CD8-positive, alpha-beta memory T cell (primary cell): ENCODE measurements at regions of chr1 and their contacts with region 1.

Region 1: GRCh38 chr1:42766741-42767509 is at the starts of genes C1orf50 and P3H1:
- DNase-seq: peak; percentile 100
- H3K4me3 ChIP-seq: peak within 1 kb of the TSS; percentile 83
- H3K4me3 Mint-ChIP-seq: no peak within 1 kb of the TSS
- H3K27ac ChIP-seq: peak within 1 kb of the TSS; percentile 90
- H3K27ac Mint-ChIP-seq: peak within 1 kb of the TSS; percentile 64 to 97 (median 94)
- H3K4me1 ChIP-seq: peaks cover 37% of the 10 kb centered on the region
- H3K4me1 Mint-ChIP-seq: peaks cover 24 to 43% (median 36%) of the 10 kb centered on the region in 3 donors
- H3K27me3 ChIP-seq: no peaks in the 10 kb centered on the region
- H3K27me3 Mint-ChIP-seq: no peaks in the 10 kb centered on the region
- total RNA-seq, gene C1orf50: 5.4 to 8.7 TPM
- total RNA-seq, gene P3H1: 35.6 to 38.5 TPM

Region 2: DNA sequence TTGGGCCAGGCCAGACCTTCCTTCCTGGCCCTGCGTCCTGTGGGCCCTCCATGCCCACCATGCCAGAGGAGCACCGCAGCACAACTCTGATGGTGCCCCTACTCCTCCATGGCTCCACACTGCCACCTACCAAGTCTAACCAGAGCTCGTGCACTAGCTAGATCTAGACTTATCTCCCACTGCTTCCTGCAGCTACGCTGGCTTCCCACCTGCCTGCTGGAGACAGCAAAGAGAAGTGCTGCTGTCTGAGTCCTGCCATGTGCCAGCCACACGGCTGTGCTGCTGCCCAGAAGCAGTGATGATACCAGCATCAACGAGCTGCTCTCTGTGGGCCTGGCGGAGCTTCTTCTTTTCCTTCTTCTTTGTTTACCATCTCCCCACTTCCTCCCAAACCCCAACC is 609.3 kb before region 1 on chr1:
- CTCF ChIA-PET with region 1: no interaction called
- POLR2A ChIA-PET with region 1: no interaction called
- DNase-seq: no peak
- H3K4me3 ChIP-seq: no peak overlapping the region
- H3K4me3 Mint-ChIP-seq: no peak overlapping the region
- H3K27ac ChIP-seq: no peak overlapping the region
- H3K27ac Mint-ChIP-seq: no peak overlapping the region
- H3K4me1 ChIP-seq: no peaks in the 10 kb centered on the region
- H3K4me1 Mint-ChIP-seq: peaks cover 6 to 9% (median 8%) of the 10 kb centered on the region in 3 donors
- H3K27me3 ChIP-seq: no peaks in the 10 kb centered on the region
- H3K27me3 Mint-ChIP-seq: peaks cover 12 to 13% of the 10 kb centered on the region in 2 donors

Region 3: GRCh38 chr1:42439940-42440339 is 327.0 kb before region 1 on chr1:
- CTCF ChIA-PET with region 1: no interaction called
- POLR2A ChIA-PET with region 1: no interaction called
- DNase-seq: no peak
- H3K4me3 ChIP-seq: no peak overlapping the region
- H3K4me3 Mint-ChIP-seq: no peak overlapping the region
- H3K27ac ChIP-seq: no peak overlapping the region
- H3K27ac Mint-ChIP-seq: no peak overlapping the region
- H3K4me1 ChIP-seq: no peaks in the 10 kb centered on the region
- H3K4me1 Mint-ChIP-seq: no peaks in the 10 kb centered on the region
- H3K27me3 ChIP-seq: no peaks in the 10 kb centered on the region
- H3K27me3 Mint-ChIP-seq: peaks cover 3 to 13% of the 10 kb centered on the region in 2 donors

Region 4: GRCh38 chr1:42657971-42658879 is 108.7 kb before region 1 on chr1 and contains the start of gene PPIH:
- CTCF ChIA-PET with region 1: interaction called, 12 read pairs
- POLR2A ChIA-PET with region 1: interaction called, 12 read pairs
- DNase-seq: peak; percentile 91 to 95 (median 92)
- H3K4me3 ChIP-seq: peak within 1 kb of the TSS; percentile 92
- H3K4me3 Mint-ChIP-seq: peak within 1 kb of the TSS; percentile 93 to 99 (median 98)
- H3K27ac ChIP-seq: peak within 1 kb of the TSS; percentile 81
- H3K27ac Mint-ChIP-seq: peak within 1 kb of the TSS; percentile 88 to 98 (median 95)
- H3K4me1 ChIP-seq: peaks cover 22% of the 10 kb centered on the region
- H3K4me1 Mint-ChIP-seq: peaks cover 35 to 47% (median 46%) of the 10 kb centered on the region in 3 donors
- H3K27me3 ChIP-seq: no peaks in the 10 kb centered on the region
- H3K27me3 Mint-ChIP-seq: no peaks in the 10 kb centered on the region
- total RNA-seq, gene PPIH: 95.9 to 117 TPM

Region 5: GRCh38 chr1:42681741-42682483 is 85.0 kb before region 1 on chr1 and contains the start of gene YBX1:
- CTCF ChIA-PET with region 1: interaction called, 15 read pairs
- POLR2A ChIA-PET with region 1: interaction called, 45 read pairs
- DNase-seq: peak; percentile 90 to 97 (median 97)
- H3K4me3 ChIP-seq: peak within 1 kb of the TSS; percentile 92
- H3K4me3 Mint-ChIP-seq: peak within 1 kb of the TSS; percentile 96 to 100 (median 99)
- H3K27ac ChIP-seq: peak within 1 kb of the TSS; percentile 86
- H3K27ac Mint-ChIP-seq: peak within 1 kb of the TSS; percentile 96 to 99 (median 98)
- H3K4me1 ChIP-seq: peaks cover 49% of the 10 kb centered on the region
- H3K4me1 Mint-ChIP-seq: peaks cover 53 to 64% (median 64%) of the 10 kb centered on the region in 3 donors
- H3K27me3 ChIP-seq: no peaks in the 10 kb centered on the region
- H3K27me3 Mint-ChIP-seq: peaks cover 0 to 2% of the 10 kb centered on the region in 2 donors
- total RNA-seq, gene YBX1: 1,366 to 1,379 TPM

Region 6: DNA sequence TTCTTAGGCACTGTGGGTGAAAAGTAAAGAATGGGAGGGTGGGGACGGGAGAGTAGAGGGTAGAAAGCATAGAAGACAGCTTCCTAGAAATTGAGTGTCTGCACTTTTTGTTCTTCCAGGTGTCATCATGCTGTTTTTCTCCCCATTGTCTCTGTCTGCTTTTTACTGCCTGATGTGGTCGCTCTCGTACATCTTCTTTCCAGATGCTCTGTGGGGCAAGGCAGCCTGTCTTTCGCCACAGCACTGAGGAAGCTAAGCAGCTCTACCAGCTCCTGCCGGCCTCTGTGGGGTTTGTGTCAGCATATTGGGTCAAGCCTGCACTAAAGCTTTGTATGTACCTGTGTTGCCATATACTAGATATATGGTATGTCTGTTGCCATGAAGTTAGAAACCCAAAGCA is 31.1 kb after region 1 on chr1:
- CTCF ChIA-PET with region 1: no interaction called
- POLR2A ChIA-PET with region 1: interaction called, 12 read pairs
- DNase-seq: no peak
- H3K4me3 ChIP-seq: no peak overlapping the region
- H3K4me3 Mint-ChIP-seq: no peak overlapping the region
- H3K27ac ChIP-seq: no peak overlapping the region
- H3K27ac Mint-ChIP-seq: no peak overlapping the region
- H3K4me1 ChIP-seq: no peaks in the 10 kb centered on the region
- H3K4me1 Mint-ChIP-seq: no peaks in the 10 kb centered on the region
- H3K27me3 ChIP-seq: no peaks in the 10 kb centered on the region
- H3K27me3 Mint-ChIP-seq: peaks cover 0 to 4% of the 10 kb centered on the region in 2 donors

Region 7: GRCh38 chr1:42816585-42817434 is 49.9 kb after region 1 on chr1 and contains the starts of genes ERMAP and SVBP:
- CTCF ChIA-PET with region 1: interaction called, 3 read pairs
- POLR2A ChIA-PET with region 1: interaction called, 30 read pairs
- DNase-seq: peak; percentile 91 to 95 (median 92)
- H3K4me3 ChIP-seq: peak within 1 kb of the TSS; percentile 60
- H3K4me3 Mint-ChIP-seq: peak within 1 kb of the TSS; percentile 78 to 91 (median 85)
- H3K27ac ChIP-seq: peak within 1 kb of the TSS; percentile 76
- H3K27ac Mint-ChIP-seq: peak within 1 kb of the TSS; percentile 84 to 98 (median 94)
- H3K4me1 ChIP-seq: peaks cover 10% of the 10 kb centered on the region
- H3K4me1 Mint-ChIP-seq: peaks cover 18 to 29% (median 23%) of the 10 kb centered on the region in 3 donors
- H3K27me3 ChIP-seq: no peaks in the 10 kb centered on the region
- H3K27me3 Mint-ChIP-seq: no peaks in the 10 kb centered on the region
- total RNA-seq, gene ERMAP: 3.5 to 3.6 TPM
- total RNA-seq, gene SVBP: 12.6 to 16.4 TPM

Region 8: DNA sequence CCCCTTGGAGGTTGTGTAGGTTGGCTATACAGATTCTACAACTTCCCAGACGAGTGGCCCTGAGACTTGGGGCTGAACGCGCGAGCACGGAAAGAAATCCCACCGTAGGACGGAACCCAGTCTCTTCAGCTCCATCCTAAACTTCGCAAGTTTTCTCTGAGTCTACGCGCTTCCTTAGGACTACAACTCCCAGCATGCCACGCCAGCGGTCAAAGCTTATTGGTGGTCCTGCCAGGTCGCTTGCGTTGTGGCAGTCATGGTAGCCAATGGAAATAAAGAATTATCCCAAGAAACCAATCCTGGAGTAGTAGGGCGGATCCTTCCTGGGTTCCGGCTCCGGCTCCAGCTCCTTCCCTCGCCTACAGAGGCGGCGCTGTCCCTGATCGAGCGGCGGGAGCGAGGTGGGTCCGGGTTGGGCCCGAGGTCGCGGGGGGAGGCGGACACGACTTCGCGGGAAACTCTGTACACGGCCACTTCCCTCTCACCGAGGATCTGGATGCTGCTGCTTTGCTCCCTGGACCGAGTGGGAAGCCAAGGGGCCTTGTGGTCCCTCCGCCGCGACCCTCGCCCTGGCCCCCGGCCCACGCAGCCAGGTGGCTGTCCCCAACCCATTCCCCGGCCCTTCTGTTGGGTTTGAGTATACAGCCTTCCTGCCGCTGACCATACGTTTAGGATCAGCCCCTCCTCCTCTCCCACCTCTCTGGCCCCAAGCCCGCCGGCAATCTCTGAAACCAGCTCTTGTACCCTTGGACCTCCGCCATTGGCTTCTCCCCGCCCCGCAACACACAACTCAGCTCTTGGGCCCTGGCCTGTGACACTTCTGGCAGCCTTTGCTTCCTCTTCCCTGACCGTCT is 79.6 kb after region 1 on chr1 and contains the start of gene ZNF691:
- CTCF ChIA-PET with region 1: interaction called, 13 read pairs
- POLR2A ChIA-PET with region 1: interaction called, 18 read pairs
- DNase-seq: peak; percentile 81 to 92 (median 88)
- H3K4me3 ChIP-seq: peak within 1 kb of the TSS; percentile 93
- H3K4me3 Mint-ChIP-seq: peak within 1 kb of the TSS; percentile 91 to 98 (median 96)
- H3K27ac ChIP-seq: peak within 1 kb of the TSS; percentile 79
- H3K27ac Mint-ChIP-seq: peak within 1 kb of the TSS; percentile 66 to 97 (median 90)
- H3K4me1 ChIP-seq: peaks cover 20% of the 10 kb centered on the region
- H3K4me1 Mint-ChIP-seq: peaks cover 34 to 42% (median 39%) of the 10 kb centered on the region in 3 donors
- H3K27me3 ChIP-seq: no peaks in the 10 kb centered on the region
- H3K27me3 Mint-ChIP-seq: no peaks in the 10 kb centered on the region
- total RNA-seq, gene ZNF691: 10.8 TPM

Region 9: GRCh38 chr1:42913426-42914091 is 146.6 kb after region 1 on chr1:
- CTCF ChIA-PET with region 1: interaction called, 13 read pairs
- POLR2A ChIA-PET with region 1: no interaction called
- DNase-seq: peak in 4 of 5 donors; percentile 61 to 71 (median 68)
- H3K4me3 ChIP-seq: no peak overlapping the region
- H3K4me3 Mint-ChIP-seq: no peak overlapping the region
- H3K27ac ChIP-seq: no peak overlapping the region
- H3K27ac Mint-ChIP-seq: no peak overlapping the region
- H3K4me1 ChIP-seq: no peaks in the 10 kb centered on the region
- H3K4me1 Mint-ChIP-seq: peaks cover 0 to 4% (median 3%) of the 10 kb centered on the region in 3 donors
- H3K27me3 ChIP-seq: no peaks in the 10 kb centered on the region
- H3K27me3 Mint-ChIP-seq: peaks cover 7 to 15% of the 10 kb centered on the region in 2 donors

Region 10: GRCh38 chr1:43008115-43009060 is 241.5 kb after region 1 on chr1:
- CTCF ChIA-PET with region 1: no interaction called
- POLR2A ChIA-PET with region 1: no interaction called
- DNase-seq: no peak
- H3K4me3 ChIP-seq: no peak overlapping the region
- H3K4me3 Mint-ChIP-seq: no peak overlapping the region
- H3K27ac ChIP-seq: peak overlapping the region; percentile 12
- H3K27ac Mint-ChIP-seq: no peak overlapping the region
- H3K4me1 ChIP-seq: no peaks in the 10 kb centered on the region
- H3K4me1 Mint-ChIP-seq: no peaks in the 10 kb centered on the region
- H3K27me3 ChIP-seq: no peaks in the 10 kb centered on the region
- H3K27me3 Mint-ChIP-seq: peaks cover 8 to 23% of the 10 kb centered on the region in 2 donors

Region 11: GRCh38 chr1:43019226-43019625 is 252.3 kb after region 1 on chr1:
- CTCF ChIA-PET with region 1: no interaction called
- POLR2A ChIA-PET with region 1: no interaction called
- DNase-seq: no peak
- H3K4me3 ChIP-seq: no peak overlapping the region
- H3K4me3 Mint-ChIP-seq: no peak overlapping the region
- H3K27ac ChIP-seq: no peak overlapping the region
- H3K27ac Mint-ChIP-seq: peak overlapping the region in 2 of 8 donors; percentile 11 to 20
- H3K4me1 ChIP-seq: no peaks in the 10 kb centered on the region
- H3K4me1 Mint-ChIP-seq: no peaks in the 10 kb centered on the region
- H3K27me3 ChIP-seq: no peaks in the 10 kb centered on the region
- H3K27me3 Mint-ChIP-seq: peaks cover 8 to 9% of the 10 kb centered on the region in 2 donors